Common myeloid progenitor, CD34-positive (primary cell): ENCODE measurements at regions of chr12 and their contacts with region 1.

Region 1: DNA sequence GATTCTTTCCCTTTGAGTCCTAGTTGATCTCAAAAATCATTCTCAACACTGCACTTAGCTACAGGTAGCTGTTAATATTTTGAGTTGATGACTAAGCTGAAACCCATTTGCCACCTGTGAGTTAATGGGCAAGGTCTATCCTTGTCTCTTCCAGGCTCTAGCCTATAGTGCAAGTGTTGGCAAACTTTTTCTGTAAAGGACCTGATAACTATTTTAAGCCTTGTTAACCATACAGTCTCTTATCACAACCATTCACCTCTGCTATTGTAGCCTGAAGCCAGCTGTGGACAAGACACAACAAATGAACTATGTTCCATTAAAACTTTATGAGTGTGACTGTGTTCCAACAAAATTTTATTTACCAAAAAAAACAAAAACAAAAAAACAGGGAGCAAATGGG is 19.4 kb downstream of the RAP1B start:
- DNase-seq: no peak
- H3K4me3 ChIP-seq: no peak overlapping the region
- H3K27ac ChIP-seq: peak overlapping the region in 1 of 2 experiments; percentile 30
- H3K4me1 ChIP-seq: peaks cover 0 to 28% (median 8%) of the 10 kb centered on the region in 4 experiments
- H3K27me3 ChIP-seq: no peaks in the 10 kb centered on the region

Region 2: DNA sequence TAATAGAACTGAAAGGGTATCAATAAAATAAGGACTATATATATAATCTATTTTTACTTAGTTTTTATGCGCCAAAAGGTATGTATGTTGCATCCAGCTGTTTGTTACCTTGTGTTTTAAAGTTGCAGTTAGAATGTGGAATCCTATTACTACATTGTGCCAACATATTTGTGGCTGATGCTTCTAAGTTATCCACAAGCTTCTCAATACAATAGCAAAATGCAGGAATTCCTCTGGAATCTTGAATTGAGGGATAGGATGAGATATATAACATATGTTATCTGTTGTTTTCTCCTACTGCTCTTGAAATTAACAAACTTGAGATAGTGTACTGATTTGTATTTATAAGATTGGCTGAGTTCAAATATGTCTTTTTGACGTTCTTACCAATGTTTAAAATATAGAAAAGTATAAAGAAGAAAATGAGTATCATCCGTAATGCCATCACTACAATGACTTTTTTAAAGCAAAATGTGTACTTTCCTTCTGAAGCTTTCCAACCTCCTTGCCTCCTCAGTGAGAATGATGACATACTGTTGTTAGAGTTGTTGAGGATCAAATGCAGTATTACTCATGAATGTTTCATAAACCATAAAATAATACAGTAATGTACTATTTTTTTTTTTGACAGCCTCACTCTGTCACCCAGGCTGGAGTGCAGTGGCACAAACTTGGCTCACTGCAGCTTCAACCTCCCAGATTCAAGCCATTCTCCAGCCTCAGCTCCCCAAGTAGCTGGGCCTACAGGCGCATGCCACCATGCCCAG is 12.7 kb before region 1 on chr12:
- CTCF ChIA-PET with region 1: interaction called, 39 read pairs
- POLR2A ChIA-PET with region 1: interaction called, 3 read pairs
- DNase-seq: no peak
- H3K4me3 ChIP-seq: no peak overlapping the region
- H3K27ac ChIP-seq: peak overlapping the region in 1 of 2 experiments; percentile 12
- H3K4me1 ChIP-seq: peaks cover 33 to 76% (median 46%) of the 10 kb centered on the region in 4 experiments
- H3K27me3 ChIP-seq: no peaks in the 10 kb centered on the region

Region 3: GRCh38 chr12:68665016-68665569 is 35.0 kb after region 1 on chr12:
- CTCF ChIA-PET with region 1: no interaction called
- POLR2A ChIA-PET with region 1: no interaction called
- DNase-seq: no peak
- H3K4me3 ChIP-seq: no peak overlapping the region
- H3K27ac ChIP-seq: no peak overlapping the region
- H3K4me1 ChIP-seq: peaks cover 11 to 20% (median 15%) of the 10 kb centered on the region in 4 experiments
- H3K27me3 ChIP-seq: no peaks in the 10 kb centered on the region